ENCODE measurements at regions of chr16 and their contacts with region 1.

Region 1: DNA sequence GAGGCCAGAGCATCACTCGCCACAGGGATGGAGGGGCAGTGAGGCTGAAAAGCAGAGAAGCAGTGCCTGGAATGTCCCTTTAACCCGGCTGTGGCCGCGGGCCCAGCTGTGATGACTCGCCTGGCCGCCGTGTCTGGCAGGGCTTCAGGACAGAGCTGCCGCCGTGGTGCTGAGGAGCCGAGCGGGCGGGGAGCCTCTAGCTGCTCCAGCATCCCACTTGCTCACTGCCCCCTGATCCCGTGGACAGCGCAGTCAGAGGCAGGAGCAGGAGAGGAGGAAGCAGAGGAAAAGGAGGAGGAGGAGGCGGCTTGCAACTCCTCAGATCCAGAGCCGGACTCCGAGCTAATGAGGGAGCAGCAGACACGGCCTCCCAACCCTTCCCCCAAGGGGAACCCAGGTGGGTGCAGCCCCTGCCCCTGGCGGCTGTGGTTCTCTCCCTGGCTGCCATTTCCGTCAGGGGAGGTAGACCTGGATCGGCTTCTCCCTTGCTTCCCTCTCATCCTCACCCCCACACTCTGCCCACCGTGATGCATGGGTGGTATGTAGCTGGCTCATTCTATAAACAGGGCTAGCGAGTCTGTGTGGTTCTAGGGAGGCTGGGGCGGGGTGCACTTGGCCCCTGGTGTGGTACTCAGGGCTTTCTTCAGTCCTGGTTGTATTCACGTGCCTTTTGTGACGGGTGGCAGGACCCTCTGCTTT is 165.7 kb downstream of the CMIP start:
- DNase-seq: peak; percentile 69 to 87 (median 84)
- ATAC-seq: peak; percentile 51 to 85 (median 74)
- H3K4me3 ChIP-seq: peak overlapping the region in 8 of 12 donors; percentile 3 to 42 (median 16)
- H3K27ac ChIP-seq: peak overlapping the region in 7 of 12 donors; percentile 8 to 88 (median 69)
- H3K4me1 ChIP-seq: peaks cover 8 to 64% (median 53%) of the 10 kb centered on the region in 12 donors
- H3K27me3 ChIP-seq: no peaks in the 10 kb centered on the region
- CTCF ChIP-seq: no peak
- POLR2A ChIP-seq: no peak

Region 2: DNA sequence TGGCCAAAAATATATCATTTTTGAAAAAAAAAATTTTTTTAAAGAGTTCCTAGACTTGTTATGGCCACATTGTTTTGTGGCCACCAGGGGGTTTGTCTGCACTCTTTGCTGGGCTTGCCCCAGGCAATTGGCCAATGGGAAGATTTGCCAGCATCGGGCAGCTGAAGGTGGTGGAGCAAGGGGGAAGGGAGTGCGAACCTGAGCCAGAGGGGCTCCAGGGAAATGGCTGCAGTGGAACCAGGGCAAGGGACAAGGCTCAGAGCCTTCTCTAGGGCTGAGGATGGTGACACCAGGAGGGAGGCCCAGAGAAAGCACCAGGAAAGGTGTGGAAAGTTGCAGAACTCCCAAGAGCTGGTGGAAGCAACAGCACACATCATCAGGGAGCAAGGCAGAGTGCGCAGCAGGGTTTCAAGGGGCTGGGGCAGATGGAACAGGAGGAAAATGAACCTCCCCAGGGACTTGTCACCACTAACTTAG is 181.2 kb before region 1 on chr16:
- intact Hi-C with region 1: no loop called
- DNase-seq: peak in 3 of 5 donors; percentile 35 to 58 (median 49)
- ATAC-seq: peak in 2 of 4 donors; percentile 38 to 51
- H3K4me3 ChIP-seq: no peak overlapping the region
- H3K27ac ChIP-seq: no peak overlapping the region
- H3K4me1 ChIP-seq: peaks cover 0 to 25% (median 0%) of the 10 kb centered on the region in 12 donors
- H3K27me3 ChIP-seq: no peaks in the 10 kb centered on the region
- CTCF ChIP-seq: peak; percentile 19 to 56 (median 40)
- POLR2A ChIP-seq: no peak

Region 3: DNA sequence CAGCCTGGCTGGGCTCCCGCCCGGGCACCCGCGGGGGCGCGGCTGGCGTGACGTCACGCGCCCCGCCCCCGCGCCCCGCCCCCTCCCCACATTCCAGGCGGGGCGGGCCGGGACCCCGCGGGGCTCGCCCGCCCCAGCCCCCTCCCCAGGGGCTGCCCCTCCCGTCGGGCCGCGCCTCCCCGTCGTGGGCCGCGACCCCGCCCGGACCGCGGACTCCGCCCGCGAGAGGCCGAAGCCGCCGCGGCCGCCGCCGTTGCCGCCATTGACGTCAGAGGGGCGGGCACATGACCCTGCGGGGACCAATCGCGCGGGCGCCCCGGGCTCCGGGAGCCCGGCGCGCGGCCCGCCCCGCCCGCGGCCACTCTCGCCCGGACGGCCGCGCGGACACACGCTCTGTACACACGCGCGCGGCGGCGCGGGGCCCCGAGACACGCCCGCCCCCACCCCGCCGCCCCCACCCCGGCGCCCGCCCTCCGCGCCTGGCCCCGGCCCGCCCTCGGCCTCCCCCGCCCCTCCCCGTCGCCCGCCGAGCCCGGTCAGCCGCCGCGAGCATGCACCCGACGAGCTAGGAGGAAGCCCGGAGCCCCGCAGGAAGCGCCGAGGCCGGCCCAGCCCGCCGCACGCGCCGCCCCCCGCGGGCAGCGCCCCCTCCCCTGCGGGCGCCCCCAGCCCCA is 165.7 kb before region 1 on chr16 and contains the start of gene CMIP:
- intact Hi-C with region 1: loop called in 2 of 10 experiments (anchors 5 to 10 kb)
- DNase-seq: peak; percentile 88 to 92 (median 89)
- ATAC-seq: peak; percentile 35 to 92 (median 86)
- H3K4me3 ChIP-seq: peak within 1 kb of the TSS; percentile 54 to 96 (median 78)
- H3K27ac ChIP-seq: peak within 1 kb of the TSS; percentile 52 to 96 (median 81)
- H3K4me1 ChIP-seq: peaks cover 0 to 36% (median 17%) of the 10 kb centered on the region in 12 donors
- H3K27me3 ChIP-seq: no peaks in the 10 kb centered on the region
- CTCF ChIP-seq: no peak
- POLR2A ChIP-seq: no peak
- total RNA-seq, gene CMIP: 7.6 to 48.8 (median 16.3) TPM

Region 4: GRCh38 chr16:81493755-81494433 is 116.4 kb before region 1 on chr16:
- intact Hi-C with region 1: loop called in 2 of 10 experiments (anchors 2 to 10 kb)
- DNase-seq: peak in 1 of 5 donors; percentile 24
- ATAC-seq: peak; percentile 30 to 85 (median 54)
- H3K4me3 ChIP-seq: no peak overlapping the region
- H3K27ac ChIP-seq: peak overlapping the region in 11 of 12 donors; percentile 13 to 81 (median 74)
- H3K4me1 ChIP-seq: peaks cover 3 to 96% (median 47%) of the 10 kb centered on the region in 12 donors
- H3K27me3 ChIP-seq: no peaks in the 10 kb centered on the region
- CTCF ChIP-seq: no peak
- POLR2A ChIP-seq: no peak

Region 5: DNA sequence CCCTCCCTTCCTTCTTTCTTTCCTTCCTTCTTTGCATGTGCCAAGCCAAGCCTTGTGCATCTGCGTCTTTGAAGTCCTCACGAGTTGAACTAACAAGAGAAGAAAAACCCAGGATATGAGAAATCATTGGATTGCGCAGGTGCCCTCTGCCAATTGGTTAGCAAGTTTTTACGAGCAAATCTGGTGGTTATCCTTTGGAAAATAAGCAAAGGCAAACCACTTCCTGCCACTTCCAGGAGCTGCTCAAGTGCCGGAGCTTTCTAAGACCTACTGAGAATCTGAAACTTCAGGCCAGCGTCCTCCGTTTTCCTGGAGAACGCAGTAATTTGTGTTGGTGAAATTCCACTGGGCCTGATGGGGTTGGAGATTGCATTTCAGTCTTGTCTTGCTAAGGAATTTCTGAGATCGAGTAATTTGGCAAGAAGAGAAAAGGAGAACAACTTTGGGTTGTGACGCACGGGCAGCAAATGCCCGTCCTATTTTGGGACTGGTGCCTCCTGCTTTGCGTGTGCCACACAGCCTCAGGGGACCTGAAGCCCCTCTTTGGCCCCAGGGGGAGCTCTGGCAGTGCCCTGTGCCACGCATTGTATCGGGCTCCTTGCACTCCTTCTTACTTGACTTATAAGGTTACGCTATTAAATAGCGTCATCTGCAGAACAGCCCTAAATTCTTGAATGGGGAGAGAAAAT is 109.3 kb before region 1 on chr16:
- intact Hi-C with region 1: loop called in 2 of 10 experiments (anchors 5 to 10 kb)
- DNase-seq: peak in 1 of 5 donors; percentile 39
- ATAC-seq: peak in 1 of 4 donors; percentile 41
- H3K4me3 ChIP-seq: no peak overlapping the region
- H3K27ac ChIP-seq: peak overlapping the region in 6 of 12 donors; percentile 3 to 79 (median 32)
- H3K4me1 ChIP-seq: peaks cover 3 to 84% (median 21%) of the 10 kb centered on the region in 12 donors
- H3K27me3 ChIP-seq: no peaks in the 10 kb centered on the region
- CTCF ChIP-seq: no peak
- POLR2A ChIP-seq: no peak

Region 6: GRCh38 chr16:81513204-81514040 is 96.9 kb before region 1 on chr16:
- intact Hi-C with region 1: loop called in 1 of 10 experiments (anchors 5 kb)
- DNase-seq: peak; percentile 70 to 85 (median 75)
- ATAC-seq: peak; percentile 40 to 81 (median 76)
- H3K4me3 ChIP-seq: no peak overlapping the region
- H3K27ac ChIP-seq: peak overlapping the region; percentile 4 to 70 (median 52)
- H3K4me1 ChIP-seq: peaks cover 0 to 58% (median 32%) of the 10 kb centered on the region in 12 donors
- H3K27me3 ChIP-seq: no peaks in the 10 kb centered on the region
- CTCF ChIP-seq: no peak
- POLR2A ChIP-seq: no peak

Region 7: GRCh38 chr16:81526935-81527334 is 83.4 kb before region 1 on chr16:
- intact Hi-C with region 1: loop called in 1 of 10 experiments (anchors 5 kb)
- DNase-seq: peak in 4 of 5 donors; percentile 44 to 71 (median 64)
- ATAC-seq: peak in 3 of 4 donors; percentile 38 to 62 (median 60)
- H3K4me3 ChIP-seq: no peak overlapping the region
- H3K27ac ChIP-seq: peak overlapping the region in 9 of 12 donors; percentile 12 to 63 (median 44)
- H3K4me1 ChIP-seq: peaks cover 0 to 60% (median 17%) of the 10 kb centered on the region in 12 donors
- H3K27me3 ChIP-seq: no peaks in the 10 kb centered on the region
- CTCF ChIP-seq: no peak
- POLR2A ChIP-seq: no peak

Region 8: GRCh38 chr16:82181456-82182185 is 571.3 kb after region 1 on chr16:
- intact Hi-C with region 1: no loop called
- DNase-seq: no peak
- ATAC-seq: no peak
- H3K4me3 ChIP-seq: no peak overlapping the region
- H3K27ac ChIP-seq: no peak overlapping the region
- H3K4me1 ChIP-seq: peaks cover 0 to 14% (median 0%) of the 10 kb centered on the region in 12 donors
- H3K27me3 ChIP-seq: peaks cover 0 to 32% (median 0%) of the 10 kb centered on the region in 9 donors
- CTCF ChIP-seq: no peak
- POLR2A ChIP-seq: no peak